ENCODE measurements at regions of chr9 and their contacts with region 1.

Region 1: DNA sequence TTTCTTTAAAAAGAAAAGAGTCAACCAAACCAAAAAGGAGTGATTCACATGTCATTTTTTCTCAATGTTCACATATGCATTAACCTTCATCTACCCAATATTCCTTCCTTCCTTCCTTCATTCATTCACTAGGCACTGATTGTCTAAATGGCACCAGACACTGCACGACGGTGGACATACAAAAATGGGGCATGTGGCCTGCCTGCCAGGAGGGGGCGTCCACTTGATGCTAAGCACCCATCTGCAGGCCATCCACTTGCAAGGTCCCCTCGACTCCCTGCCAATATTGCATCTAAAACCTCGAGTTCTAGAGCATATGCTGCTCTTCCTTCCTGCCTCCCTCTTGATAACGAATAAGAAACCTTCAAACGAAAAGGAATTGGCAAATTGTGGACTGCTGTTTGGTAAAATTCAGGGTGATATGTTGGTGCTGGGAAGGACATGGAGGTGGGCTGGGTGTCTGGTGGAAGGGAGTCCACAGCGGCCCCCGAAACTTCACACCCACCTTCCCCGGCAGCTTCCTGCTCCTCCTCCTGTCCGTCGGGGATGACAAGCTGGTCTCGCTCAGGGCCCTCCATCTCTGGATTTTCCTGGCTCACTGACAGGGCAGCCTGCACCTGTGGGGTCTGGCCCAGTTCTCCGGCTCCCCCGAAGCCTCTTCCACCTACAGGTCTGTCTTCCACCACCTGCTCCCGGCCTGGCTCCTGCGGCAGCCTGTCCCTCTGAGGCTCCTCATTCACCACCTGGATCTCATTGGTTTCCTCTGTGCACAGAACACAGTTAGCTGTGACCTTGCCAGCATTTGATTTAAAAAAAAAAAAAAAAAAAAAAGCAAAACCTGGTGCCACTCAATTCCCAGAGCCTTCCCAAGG is 64.3 kb downstream of the GOLM1 start:
- DNase-seq: peak; percentile 11
- H3K4me3 ChIP-seq: no peak overlapping the region
- H3K27ac ChIP-seq: no peak overlapping the region
- H3K4me1 ChIP-seq: no peaks in the 10 kb centered on the region
- H3K27me3 ChIP-seq: no peaks in the 10 kb centered on the region
- CTCF ChIP-seq: peak; percentile 53 to 54

Region 2: DNA sequence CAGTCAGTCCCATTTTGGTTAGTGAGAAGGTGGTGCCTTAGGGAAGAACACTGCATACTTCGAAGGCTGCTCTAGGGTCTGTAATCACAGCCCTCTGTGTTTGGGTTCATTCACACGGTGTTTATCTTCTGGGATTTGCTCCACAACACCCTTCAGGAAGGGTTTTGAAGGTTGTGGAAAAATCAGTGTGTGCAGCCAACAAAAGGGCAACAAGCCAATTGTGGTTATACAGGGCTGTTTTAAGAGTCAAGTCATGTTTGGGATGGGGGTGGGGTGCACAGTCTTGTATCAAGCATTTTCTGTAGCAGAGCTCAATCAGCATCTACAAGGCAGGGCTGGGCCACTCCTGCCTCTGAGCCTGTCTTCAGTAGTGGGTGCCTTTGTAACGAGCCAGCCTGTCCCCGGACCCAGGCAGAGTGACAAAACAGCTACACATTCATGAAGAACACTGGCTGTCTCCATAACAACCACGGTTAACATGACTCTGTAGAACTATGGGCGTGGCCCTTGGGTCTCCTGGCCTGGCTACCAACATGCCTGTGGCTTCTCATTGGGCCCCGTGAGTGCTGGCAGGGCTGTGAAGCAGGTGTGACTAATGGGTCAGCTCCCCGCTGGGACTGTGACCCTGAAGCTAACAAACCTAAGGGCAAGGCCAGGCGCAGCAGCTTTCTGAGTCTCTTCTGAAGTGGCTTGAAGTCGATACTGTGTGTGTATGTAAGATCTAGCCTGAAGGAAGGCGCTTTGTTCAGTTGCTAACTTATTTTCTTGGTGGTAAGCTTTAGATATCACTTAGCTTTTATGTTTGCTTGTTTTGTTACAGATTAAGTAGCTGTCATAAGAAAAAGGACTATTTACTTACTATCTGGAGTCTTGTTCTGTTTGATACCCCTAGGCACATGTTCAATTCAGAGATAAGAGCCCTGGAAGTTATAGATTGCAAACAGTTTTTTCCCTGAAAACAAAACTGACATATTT is 92.2 kb after region 1 on chr9:
- CTCF ChIA-PET with region 1: interaction called, 20 read pairs
- dilution Hi-C with region 1: no loop called
- in situ Hi-C with region 1: no loop called
- intact Hi-C with region 1: no loop called
- DNase-seq: peak; percentile 91
- H3K4me3 ChIP-seq: no peak overlapping the region
- H3K27ac ChIP-seq: peak overlapping the region; percentile 57
- H3K4me1 ChIP-seq: peaks cover 15% of the 10 kb centered on the region
- H3K27me3 ChIP-seq: no peaks in the 10 kb centered on the region
- CTCF ChIP-seq: no peak

Region 3: DNA sequence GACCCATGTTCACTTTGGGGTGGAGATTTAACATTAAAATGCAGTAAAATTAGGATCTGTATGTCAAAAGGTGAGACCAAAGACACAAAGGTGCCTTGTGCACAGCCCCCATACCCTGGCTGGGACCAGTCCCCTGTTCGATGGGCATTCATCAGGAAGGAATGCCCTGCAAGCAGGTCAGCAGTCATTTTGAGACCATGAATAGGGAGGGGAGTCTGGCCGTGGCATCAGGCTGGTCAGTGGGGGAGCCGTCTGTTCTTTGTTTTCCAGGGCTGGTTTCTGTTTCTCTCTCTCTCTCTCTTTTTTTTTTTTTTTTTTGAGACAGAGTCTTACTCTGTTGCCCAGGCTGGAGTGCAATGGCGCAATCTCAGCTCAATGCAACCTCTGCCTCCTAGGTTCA is 133.2 kb after region 1 on chr9:
- CTCF ChIA-PET with region 1: no interaction called
- dilution Hi-C with region 1: no loop called
- in situ Hi-C with region 1: no loop called
- intact Hi-C with region 1: loop called (anchors 5 kb)
- DNase-seq: no peak
- H3K4me3 ChIP-seq: no peak overlapping the region
- H3K27ac ChIP-seq: no peak overlapping the region
- H3K4me1 ChIP-seq: no peaks in the 10 kb centered on the region
- H3K27me3 ChIP-seq: no peaks in the 10 kb centered on the region
- CTCF ChIP-seq: no peak

Region 4: DNA sequence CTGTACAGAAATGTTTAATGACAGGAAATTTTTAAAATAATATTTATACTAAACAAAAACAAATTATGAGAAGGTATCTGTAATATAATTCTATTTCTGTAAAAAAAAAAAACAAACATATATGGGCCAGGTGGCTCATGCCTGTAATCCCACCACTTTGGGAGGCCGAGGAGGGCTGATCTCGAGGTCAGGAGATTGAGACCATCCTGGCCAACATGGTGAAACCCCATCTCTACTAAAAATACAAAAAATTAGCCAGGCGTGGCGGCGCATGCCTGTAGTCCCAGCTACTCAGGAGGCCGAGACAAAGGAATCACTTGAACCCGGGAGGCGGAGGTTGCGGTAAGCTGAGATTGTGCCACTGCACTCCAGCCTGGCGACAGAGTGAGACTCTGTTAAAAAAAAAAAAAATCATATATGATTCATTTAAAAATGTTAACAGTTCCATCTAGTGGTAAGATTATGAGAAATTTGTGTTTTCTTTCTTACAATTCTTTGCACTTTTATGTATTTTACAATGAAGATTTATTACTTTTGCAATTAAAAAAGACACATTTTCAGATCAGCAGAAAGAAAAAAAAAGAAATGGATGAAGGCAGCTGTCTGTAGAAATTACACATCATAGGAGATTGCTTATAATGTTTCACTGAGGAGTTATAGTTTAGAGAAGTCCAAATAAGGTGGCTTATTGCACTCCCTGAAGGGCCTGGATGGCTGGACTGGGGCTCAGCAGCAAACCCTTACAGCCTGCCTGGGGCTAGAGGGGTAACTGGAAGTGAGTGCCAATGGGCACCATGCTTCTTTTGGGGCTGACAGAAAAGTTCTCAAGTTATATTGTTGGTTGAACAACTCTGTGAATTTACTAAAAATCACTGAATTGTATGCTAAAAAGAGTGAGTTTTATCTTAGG is 204.0 kb after region 1 on chr9:
- CTCF ChIA-PET with region 1: no interaction called
- dilution Hi-C with region 1: no loop called
- in situ Hi-C with region 1: no loop called
- intact Hi-C with region 1: loop called (anchors 5 kb)
- DNase-seq: no peak
- H3K4me3 ChIP-seq: no peak overlapping the region
- H3K27ac ChIP-seq: no peak overlapping the region
- H3K4me1 ChIP-seq: no peaks in the 10 kb centered on the region
- H3K27me3 ChIP-seq: no peaks in the 10 kb centered on the region
- CTCF ChIP-seq: peak in 1 of 2 donors; percentile 1

Region 5: DNA sequence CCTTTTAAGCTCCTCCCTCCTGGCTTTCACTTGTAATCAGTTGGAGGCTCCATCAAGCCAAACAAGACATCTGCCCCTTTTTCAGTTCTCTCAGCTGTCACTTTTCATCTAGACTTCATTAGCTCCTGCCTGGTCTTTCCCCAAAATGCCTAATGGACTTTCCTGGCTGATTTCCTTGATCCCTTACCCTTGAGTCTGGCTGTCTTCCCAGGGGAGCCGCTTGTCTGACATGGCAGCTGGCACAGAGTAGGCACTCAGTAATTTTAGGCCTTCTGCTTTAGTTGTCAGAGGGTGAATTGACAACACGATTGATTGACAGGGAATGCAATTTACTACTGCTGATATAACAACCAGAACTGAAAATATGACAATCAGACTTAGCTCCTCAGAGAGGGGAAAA is 222.3 kb after region 1 on chr9:
- CTCF ChIA-PET with region 1: no interaction called
- dilution Hi-C with region 1: no loop called
- in situ Hi-C with region 1: no loop called
- intact Hi-C with region 1: no loop called
- DNase-seq: no peak
- H3K4me3 ChIP-seq: no peak overlapping the region
- H3K27ac ChIP-seq: no peak overlapping the region
- H3K4me1 ChIP-seq: no peaks in the 10 kb centered on the region
- H3K27me3 ChIP-seq: no peaks in the 10 kb centered on the region
- CTCF ChIP-seq: no peak

Measured in mammary epithelial cell (primary cell).